CD4-positive, alpha-beta memory T cell (primary cell): ENCODE measurements at regions of chr6 and their contacts with region 1.

Region 1: DNA sequence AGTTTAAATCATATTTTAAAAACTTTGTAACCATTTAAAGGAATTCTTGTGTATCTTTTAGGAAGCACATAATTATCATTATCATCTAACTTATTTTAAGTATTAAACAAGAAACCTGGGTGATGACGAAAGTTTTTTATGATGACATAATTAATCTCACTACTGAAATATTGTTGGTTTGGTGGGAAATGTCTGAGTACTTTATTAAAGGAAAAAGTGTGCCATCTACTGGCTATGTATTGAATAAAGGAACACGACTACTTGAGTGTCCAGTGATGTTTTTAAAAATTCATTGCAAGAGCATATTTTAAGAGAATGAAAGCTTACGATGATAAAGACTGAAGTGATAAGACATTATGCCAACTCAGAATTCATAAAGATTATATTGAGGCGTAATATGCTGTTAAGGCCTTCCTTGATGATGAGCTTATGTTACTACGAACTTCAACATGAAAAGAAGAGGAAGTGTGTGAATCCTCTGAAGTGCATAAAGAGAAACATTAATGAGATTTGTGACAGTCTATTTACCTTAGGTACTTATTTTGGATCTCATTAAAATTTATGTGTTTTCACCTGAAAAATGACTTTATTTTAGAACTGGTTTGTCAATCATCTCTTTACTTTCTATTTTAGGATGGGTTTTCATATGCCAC is 12.0 kb upstream of the TRMT11 start:
- DNase-seq: peak in 4 of 5 donors; percentile 43 to 53 (median 46)
- H3K4me3 ChIP-seq: no peak overlapping the region
- H3K4me3 Mint-ChIP-seq: no peak overlapping the region
- H3K27ac ChIP-seq: no peak overlapping the region
- H3K27ac Mint-ChIP-seq: peak overlapping the region in 3 of 7 donors; percentile 14 to 33 (median 23)
- H3K4me1 ChIP-seq: no peaks in the 10 kb centered on the region
- H3K4me1 Mint-ChIP-seq: peaks cover 0 to 10% (median 9%) of the 10 kb centered on the region in 4 donors
- H3K27me3 ChIP-seq: no peaks in the 10 kb centered on the region
- H3K27me3 Mint-ChIP-seq: no peaks in the 10 kb centered on the region

Region 2: DNA sequence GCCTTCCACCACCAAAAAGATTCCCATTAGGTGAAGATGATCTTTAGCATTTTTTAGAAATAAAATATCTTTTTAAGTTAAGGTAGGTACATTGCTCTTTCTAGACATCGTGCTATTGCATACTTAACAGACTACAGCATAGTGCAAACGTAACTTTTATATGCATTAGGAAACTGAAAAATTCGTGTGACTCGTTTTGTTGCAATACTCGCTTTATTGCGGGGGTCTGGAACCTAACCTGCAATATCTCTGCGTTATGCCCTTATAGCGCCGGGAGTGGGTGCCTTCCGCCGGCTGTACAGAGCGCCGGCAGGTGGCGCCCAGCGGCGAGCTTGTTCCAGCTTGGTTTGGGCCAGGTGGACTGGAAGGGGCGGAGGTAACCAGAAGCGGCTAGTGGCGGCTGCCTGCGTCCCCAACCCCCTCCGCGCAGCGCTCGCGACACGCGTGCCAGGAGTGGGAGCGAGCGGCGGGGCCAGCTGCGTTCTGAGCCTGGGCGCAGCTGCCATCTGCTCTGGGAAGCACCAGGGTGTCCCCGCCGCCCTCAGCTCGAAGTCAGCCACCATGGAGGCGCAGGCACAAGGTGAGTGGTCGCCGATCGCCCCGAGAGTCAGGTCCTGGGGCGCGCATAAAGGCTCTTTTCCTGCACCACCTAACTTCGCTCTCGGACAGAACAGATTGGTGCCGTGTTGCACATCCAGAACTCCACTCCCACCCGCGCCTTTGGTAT is 820.8 kb before region 1 on chr6 and contains the start of gene TPD52L1:
- CTCF ChIA-PET with region 1: no interaction called
- POLR2A ChIA-PET with region 1: no interaction called
- intact Hi-C with region 1: loop called (anchors 1 kb)
- DNase-seq: peak; percentile 37 to 52 (median 44)
- H3K4me3 ChIP-seq: peak within 1 kb of the TSS; percentile 29 to 44
- H3K4me3 Mint-ChIP-seq: peak within 1 kb of the TSS; percentile 74 to 88 (median 83)
- H3K27ac ChIP-seq: no peak within 1 kb of the TSS
- H3K27ac Mint-ChIP-seq: peak within 1 kb of the TSS in 1 of 7 donors; percentile 61
- H3K4me1 ChIP-seq: peaks cover 11% of the 10 kb centered on the region
- H3K4me1 Mint-ChIP-seq: peaks cover 0 to 9% (median 7%) of the 10 kb centered on the region in 4 donors
- H3K27me3 ChIP-seq: peaks cover 3% of the 10 kb centered on the region
- H3K27me3 Mint-ChIP-seq: peaks cover 15 to 28% of the 10 kb centered on the region in 2 donors
- total RNA-seq, gene TPD52L1: 0.33 to 0.35 TPM

Region 3: DNA sequence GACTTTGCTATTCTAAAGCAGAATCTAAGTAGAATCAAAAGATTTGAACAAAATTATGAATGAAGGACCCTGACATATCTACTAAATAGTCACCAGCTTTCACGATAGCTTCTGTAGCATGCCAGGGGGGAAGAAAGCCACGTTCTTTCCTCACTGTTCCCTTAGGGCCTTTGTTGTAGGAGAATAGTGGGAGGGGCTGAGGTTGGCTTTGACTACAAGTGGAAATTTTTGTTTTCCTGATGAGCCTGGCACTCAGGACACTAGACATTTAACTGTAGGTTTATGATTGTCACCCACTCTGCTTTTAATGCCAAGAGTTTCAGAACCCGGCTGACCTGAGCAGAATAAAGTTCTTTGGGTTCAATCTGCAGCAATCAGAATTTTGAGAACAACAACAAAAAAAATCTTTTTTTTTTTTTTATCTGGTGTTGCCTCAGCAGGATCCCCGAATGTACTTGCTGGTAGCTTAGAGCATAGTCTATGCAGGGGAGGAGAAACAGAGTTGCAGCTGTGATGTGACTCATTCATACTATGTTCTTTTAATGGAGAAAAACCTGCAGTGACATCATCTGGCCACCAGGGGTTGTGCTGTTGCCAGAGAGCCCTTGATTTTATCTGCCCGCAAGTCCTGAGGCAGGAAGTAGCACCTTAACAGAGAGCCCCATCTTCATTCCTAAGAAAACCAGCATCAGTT is 782.3 kb before region 1 on chr6:
- CTCF ChIA-PET with region 1: interaction called, 4 read pairs
- POLR2A ChIA-PET with region 1: no interaction called
- intact Hi-C with region 1: loop called (anchors 10 kb)
- DNase-seq: peak; percentile 41 to 59 (median 45)
- H3K4me3 ChIP-seq: no peak overlapping the region
- H3K4me3 Mint-ChIP-seq: no peak overlapping the region
- H3K27ac ChIP-seq: no peak overlapping the region
- H3K27ac Mint-ChIP-seq: no peak overlapping the region
- H3K4me1 ChIP-seq: no peaks in the 10 kb centered on the region
- H3K4me1 Mint-ChIP-seq: peaks cover 0 to 3% (median 1%) of the 10 kb centered on the region in 4 donors
- H3K27me3 ChIP-seq: no peaks in the 10 kb centered on the region
- H3K27me3 Mint-ChIP-seq: peaks cover 3 to 4% of the 10 kb centered on the region in 2 donors

Region 4: GRCh38 chr6:125693480-125693879 is 280.9 kb before region 1 on chr6:
- CTCF ChIA-PET with region 1: no interaction called
- POLR2A ChIA-PET with region 1: no interaction called
- intact Hi-C with region 1: no loop called
- DNase-seq: no peak
- H3K4me3 ChIP-seq: no peak overlapping the region
- H3K4me3 Mint-ChIP-seq: no peak overlapping the region
- H3K27ac ChIP-seq: no peak overlapping the region
- H3K27ac Mint-ChIP-seq: no peak overlapping the region
- H3K4me1 ChIP-seq: no peaks in the 10 kb centered on the region
- H3K4me1 Mint-ChIP-seq: no peaks in the 10 kb centered on the region
- H3K27me3 ChIP-seq: no peaks in the 10 kb centered on the region
- H3K27me3 Mint-ChIP-seq: peaks cover 20 to 35% of the 10 kb centered on the region in 2 donors

Region 5: GRCh38 chr6:125858427-125859320 is 115.7 kb before region 1 on chr6:
- CTCF ChIA-PET with region 1: interaction called, 3 read pairs
- POLR2A ChIA-PET with region 1: no interaction called
- intact Hi-C with region 1: loop called (anchors 1 kb)
- DNase-seq: peak; percentile 8 to 40 (median 19)
- H3K4me3 ChIP-seq: no peak overlapping the region
- H3K4me3 Mint-ChIP-seq: peak overlapping the region in 1 of 8 donors; percentile 15
- H3K27ac ChIP-seq: no peak overlapping the region
- H3K27ac Mint-ChIP-seq: peak overlapping the region in 5 of 7 donors; percentile 62 to 87 (median 70)
- H3K4me1 ChIP-seq: peaks cover under 1% of the 10 kb centered on the region
- H3K4me1 Mint-ChIP-seq: peaks cover 7 to 11% (median 10%) of the 10 kb centered on the region in 4 donors
- H3K27me3 ChIP-seq: no peaks in the 10 kb centered on the region
- H3K27me3 Mint-ChIP-seq: no peaks in the 10 kb centered on the region

Region 6: GRCh38 chr6:125986300-125987025 is 12.1 kb after region 1 on chr6 and contains the start of gene TRMT11:
- CTCF ChIA-PET with region 1: interaction called, 14 read pairs
- POLR2A ChIA-PET with region 1: interaction called, 9 read pairs
- intact Hi-C with region 1: no loop called
- DNase-seq: peak; percentile 80 to 86 (median 81)
- H3K4me3 ChIP-seq: peak within 1 kb of the TSS; percentile 93 to 95
- H3K4me3 Mint-ChIP-seq: peak within 1 kb of the TSS; percentile 6 to 57 (median 24)
- H3K27ac ChIP-seq: peak within 1 kb of the TSS; percentile 77
- H3K27ac Mint-ChIP-seq: no peak within 1 kb of the TSS
- H3K4me1 ChIP-seq: peaks cover 31% of the 10 kb centered on the region
- H3K4me1 Mint-ChIP-seq: peaks cover 2 to 15% (median 8%) of the 10 kb centered on the region in 4 donors
- H3K27me3 ChIP-seq: no peaks in the 10 kb centered on the region
- H3K27me3 Mint-ChIP-seq: no peaks in the 10 kb centered on the region
- total RNA-seq, gene TRMT11: 25.5 to 30.8 TPM

Region 7: DNA sequence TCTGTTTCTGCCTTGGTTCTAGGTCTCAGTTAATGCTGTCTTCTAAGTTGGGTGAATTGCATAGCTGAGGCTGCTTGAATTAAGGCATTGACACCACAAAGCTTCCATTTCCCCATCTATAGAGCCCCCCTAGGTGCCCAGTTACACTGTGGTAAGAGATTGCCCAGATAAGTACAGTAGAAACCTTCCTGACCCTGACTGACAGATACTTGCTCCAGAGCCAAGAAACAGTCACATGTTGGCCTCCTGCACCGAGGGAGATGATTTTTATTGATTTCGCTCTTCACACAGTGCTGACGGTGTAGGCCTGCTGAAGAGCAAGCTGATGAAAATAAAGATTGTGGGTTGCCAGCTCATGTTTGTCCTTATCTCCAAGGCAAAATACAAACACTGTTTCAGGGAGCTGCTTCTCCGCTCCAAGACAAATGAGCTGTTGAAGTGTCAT is 79.9 kb after region 1 on chr6:
- CTCF ChIA-PET with region 1: no interaction called
- POLR2A ChIA-PET with region 1: no interaction called
- intact Hi-C with region 1: no loop called
- DNase-seq: no peak
- H3K4me3 ChIP-seq: no peak overlapping the region
- H3K4me3 Mint-ChIP-seq: no peak overlapping the region
- H3K27ac ChIP-seq: no peak overlapping the region
- H3K27ac Mint-ChIP-seq: no peak overlapping the region
- H3K4me1 ChIP-seq: no peaks in the 10 kb centered on the region
- H3K4me1 Mint-ChIP-seq: peaks cover 0 to 5% (median 0%) of the 10 kb centered on the region in 4 donors
- H3K27me3 ChIP-seq: no peaks in the 10 kb centered on the region
- H3K27me3 Mint-ChIP-seq: no peaks in the 10 kb centered on the region